ENCODE measurements at regions of chr2 and their contacts with region 1.

Region 1: GRCh38 chr2:223957092-223957851 is at the start of gene MRPL44:
- DNase-seq: peak; percentile 96
- ATAC-seq: peak; percentile 100
- H3K4me3 Mint-ChIP-seq: peak within 1 kb of the TSS; percentile 95
- H3K27ac Mint-ChIP-seq: peak within 1 kb of the TSS; percentile 92
- H3K4me1 Mint-ChIP-seq: peaks cover 58% of the 10 kb centered on the region
- H3K27me3 Mint-ChIP-seq: no peaks in the 10 kb centered on the region
- total RNA-seq, gene MRPL44: 30.4 to 34.9 TPM

Region 2: DNA sequence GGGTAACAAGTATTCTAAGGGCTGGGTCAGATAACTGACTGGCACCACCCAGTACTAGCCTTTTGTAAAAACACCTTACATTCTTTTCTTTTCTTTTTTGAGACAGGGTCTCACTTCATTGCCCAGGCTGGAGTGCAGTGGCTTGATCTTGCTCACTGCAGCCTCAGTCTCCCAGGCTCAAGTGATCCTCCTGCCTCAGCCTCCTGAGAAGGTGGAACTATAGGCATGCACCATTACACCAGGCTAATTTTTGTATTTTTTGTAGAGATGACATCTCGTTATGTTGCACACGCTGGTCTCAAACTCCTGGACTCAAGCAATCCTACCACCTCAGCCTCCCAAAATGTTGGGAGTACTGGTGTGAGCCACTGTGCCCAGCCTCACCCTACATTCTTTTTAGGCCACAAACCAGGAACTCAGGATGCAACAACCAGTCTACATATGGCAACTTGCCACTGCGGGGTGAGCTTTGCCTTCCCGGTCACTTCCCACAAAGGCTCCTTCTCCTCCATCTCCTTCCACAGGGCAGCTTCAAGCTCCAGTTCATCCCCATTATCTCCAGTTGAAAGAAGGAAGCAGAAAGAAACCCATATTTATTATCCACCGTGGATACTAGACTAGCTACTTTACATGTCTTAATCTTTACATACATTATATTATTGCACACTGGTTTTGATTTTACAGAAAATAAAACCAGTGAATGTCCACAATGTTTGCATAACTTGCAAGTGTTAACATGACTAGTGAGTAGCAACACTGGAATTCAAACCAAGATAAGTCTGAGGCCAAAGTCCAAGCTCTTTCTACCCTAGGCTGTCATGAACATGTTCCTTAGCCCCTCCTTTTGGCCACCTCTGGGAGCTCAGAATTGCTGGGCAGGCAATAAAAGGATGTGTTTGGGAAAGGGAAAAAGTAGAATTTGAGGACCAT is 96.2 kb before region 1 on chr2:
- CTCF ChIA-PET with region 1: no interaction called
- DNase-seq: no peak
- ATAC-seq: no peak
- H3K4me3 Mint-ChIP-seq: no peak overlapping the region
- H3K27ac Mint-ChIP-seq: no peak overlapping the region
- H3K4me1 Mint-ChIP-seq: peaks cover 38% of the 10 kb centered on the region
- H3K27me3 Mint-ChIP-seq: no peaks in the 10 kb centered on the region

Region 3: GRCh38 chr2:223944703-223945531 is 12.4 kb before region 1 on chr2 and contains the start of gene WDFY1:
- CTCF ChIA-PET with region 1: interaction called, 10 read pairs
- DNase-seq: peak; percentile 90
- ATAC-seq: peak; percentile 82
- H3K4me3 Mint-ChIP-seq: peak within 1 kb of the TSS; percentile 94
- H3K27ac Mint-ChIP-seq: peak within 1 kb of the TSS; percentile 90
- H3K4me1 Mint-ChIP-seq: peaks cover 54% of the 10 kb centered on the region
- H3K27me3 Mint-ChIP-seq: no peaks in the 10 kb centered on the region
- total RNA-seq, gene WDFY1: 29.2 to 55.0 TPM

Measured in activated CD8-positive, alpha-beta memory T cell treated with anti-CD3 and anti-CD28 coated beads, Interleukin-2, amount 10 ng/mL, durations not matched to agents 7 days and 5 days (primary cell).